BJ (cell line): ENCODE measurements at regions of chr7 and their contacts with region 1.

Region 1: GRCh38 chr7:105003275-105003674 is 10.7 kb upstream of the KMT2E start:
- DNase-seq: no peak
- H3K4me3 ChIP-seq: no peak overlapping the region
- H3K27me3 ChIP-seq: no peaks in the 10 kb centered on the region
- CTCF ChIP-seq: no peak

Region 2: GRCh38 chr7:103987451-103987850 is 1015.8 kb before region 1 on chr7:
- CTCF ChIA-PET with region 1: no interaction called
- POLR2A ChIA-PET with region 1: no interaction called
- DNase-seq: no peak
- H3K4me3 ChIP-seq: no peak overlapping the region
- H3K27me3 ChIP-seq: peaks cover 19% of the 10 kb centered on the region
- CTCF ChIP-seq: no peak

Region 3: GRCh38 chr7:104983578-104984539 is 19.4 kb before region 1 on chr7:
- CTCF ChIA-PET with region 1: interaction called, 12 read pairs
- POLR2A ChIA-PET with region 1: no interaction called
- DNase-seq: peak; percentile 35
- H3K4me3 ChIP-seq: peak overlapping the region; percentile 60
- H3K27me3 ChIP-seq: no peaks in the 10 kb centered on the region
- CTCF ChIP-seq: peak; percentile 64